ENCODE measurements at regions of chr2 and their contacts with region 1.

Region 1: DNA sequence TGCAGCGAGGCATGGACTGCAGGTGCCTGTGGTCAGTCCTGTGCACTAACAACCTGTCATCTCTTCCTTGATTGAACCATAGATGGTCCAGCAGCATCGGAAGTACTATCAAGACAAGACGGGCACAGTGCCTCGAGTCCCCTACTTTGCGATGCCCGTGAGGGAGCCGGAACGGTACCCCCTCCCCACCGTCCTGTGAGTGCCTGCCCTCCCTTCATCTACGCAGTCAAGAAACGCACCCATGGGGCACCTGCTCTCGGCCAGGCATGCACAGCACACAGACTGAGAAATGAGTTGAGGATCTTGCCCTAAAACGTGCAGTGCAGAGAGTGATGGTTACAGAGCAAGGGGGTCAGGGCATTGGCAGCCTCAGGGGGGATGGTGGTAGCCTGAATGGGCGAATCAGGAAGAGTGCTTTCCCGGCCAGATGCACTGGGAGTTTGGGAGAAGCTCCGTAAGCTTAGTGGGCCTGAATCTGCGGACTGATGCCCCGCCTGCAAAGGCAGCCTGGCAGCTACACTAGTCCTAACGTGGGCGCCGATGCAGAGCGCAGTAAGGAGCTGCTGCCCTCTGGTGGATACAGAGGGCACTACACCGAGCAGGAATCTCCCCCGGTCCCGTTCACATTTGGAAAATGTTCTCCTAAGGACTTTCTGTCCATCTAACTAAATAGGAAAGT is 63.6 kb downstream of the CIB4 start:
- DNase-seq: peak; percentile 26 to 76 (median 55)
- ATAC-seq: peak; percentile 93
- H3K4me3 ChIP-seq: no peak overlapping the region
- H3K4me3 Mint-ChIP-seq: no peak overlapping the region
- H3K27ac ChIP-seq: no peak overlapping the region
- H3K27ac Mint-ChIP-seq: no peak overlapping the region
- H3K4me1 ChIP-seq: peaks cover 4% of the 10 kb centered on the region
- H3K4me1 Mint-ChIP-seq: no peaks in the 10 kb centered on the region
- H3K27me3 ChIP-seq: peaks cover 9 to 10% of the 10 kb centered on the region in 2 experiments
- H3K27me3 Mint-ChIP-seq: peaks cover 30% of the 10 kb centered on the region
- CTCF ChIP-seq: peak; percentile 98

Region 2: DNA sequence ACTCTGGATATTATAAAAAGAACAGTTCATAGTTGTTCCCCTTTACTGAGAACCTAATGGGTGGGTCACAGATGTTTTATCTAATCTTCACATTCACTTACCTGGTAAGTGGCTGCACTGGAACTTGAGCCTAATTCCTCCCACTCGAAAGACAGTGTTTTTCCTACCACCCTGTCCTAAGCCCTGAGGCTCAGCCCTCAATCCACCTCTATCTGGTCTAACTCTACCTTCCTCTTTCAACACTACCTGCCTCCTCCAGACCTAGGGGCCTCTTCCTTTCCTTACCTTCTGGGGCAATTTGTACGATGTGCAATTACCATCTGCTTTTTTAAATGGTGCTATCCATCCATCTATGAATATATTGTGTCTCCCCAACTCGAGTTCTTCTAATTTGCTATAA is 585.6 kb before region 1 on chr2:
- CTCF ChIA-PET with region 1: interaction called, 7 read pairs
- POLR2A ChIA-PET with region 1: no interaction called
- intact Hi-C with region 1: loop called in 1 of 2 experiments (anchors 5 kb)
- DNase-seq: no peak
- ATAC-seq: peak; percentile 13
- H3K4me3 ChIP-seq: no peak overlapping the region
- H3K4me3 Mint-ChIP-seq: no peak overlapping the region
- H3K27ac ChIP-seq: no peak overlapping the region
- H3K27ac Mint-ChIP-seq: peak overlapping the region; percentile 1
- H3K4me1 ChIP-seq: peaks cover 9% of the 10 kb centered on the region
- H3K4me1 Mint-ChIP-seq: peaks cover 8% of the 10 kb centered on the region
- H3K27me3 ChIP-seq: no peaks in the 10 kb centered on the region
- H3K27me3 Mint-ChIP-seq: no peaks in the 10 kb centered on the region
- CTCF ChIP-seq: no peak

Region 3: DNA sequence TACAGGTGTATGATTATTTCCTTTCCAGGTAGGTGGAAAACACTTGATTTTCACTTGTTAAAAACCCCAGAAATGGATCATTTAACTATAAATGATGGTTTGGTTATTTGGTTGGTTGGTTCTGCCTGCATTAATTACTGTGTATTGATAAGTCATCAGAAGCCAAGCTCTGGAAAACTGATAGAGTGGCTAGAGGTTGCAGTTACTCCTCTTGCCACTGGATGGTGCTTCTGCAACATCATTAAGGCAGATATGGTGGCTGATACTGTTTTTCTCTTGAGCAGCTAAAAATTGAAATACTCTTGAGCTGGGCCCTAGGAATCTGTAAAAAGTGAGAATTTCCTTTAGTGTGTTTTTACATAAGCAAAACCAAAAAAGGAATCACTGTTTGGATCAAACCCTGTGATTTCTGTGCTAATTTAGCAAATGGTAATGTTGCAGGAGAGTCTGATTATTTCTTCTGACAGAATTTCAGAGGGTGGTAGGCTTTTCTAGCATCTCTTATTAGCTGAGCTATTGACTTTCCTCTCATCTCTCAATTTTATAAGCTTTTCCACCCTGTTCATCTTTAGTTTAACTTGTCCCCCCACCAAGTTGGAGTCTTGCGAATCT is 489.4 kb before region 1 on chr2:
- CTCF ChIA-PET with region 1: no interaction called
- POLR2A ChIA-PET with region 1: no interaction called
- intact Hi-C with region 1: loop called in 1 of 2 experiments (anchors 10 kb)
- DNase-seq: peak in 5 of 14 experiments; percentile 9 to 61 (median 47)
- ATAC-seq: peak; percentile 86
- H3K4me3 ChIP-seq: no peak overlapping the region
- H3K4me3 Mint-ChIP-seq: no peak overlapping the region
- H3K27ac ChIP-seq: no peak overlapping the region
- H3K27ac Mint-ChIP-seq: no peak overlapping the region
- H3K4me1 ChIP-seq: peaks cover 4% of the 10 kb centered on the region
- H3K4me1 Mint-ChIP-seq: peaks cover 48% of the 10 kb centered on the region
- H3K27me3 ChIP-seq: no peaks in the 10 kb centered on the region
- H3K27me3 Mint-ChIP-seq: no peaks in the 10 kb centered on the region
- CTCF ChIP-seq: peak; percentile 77

Region 4: GRCh38 chr2:26235085-26235484 is 342.5 kb before region 1 on chr2:
- CTCF ChIA-PET with region 1: no interaction called
- POLR2A ChIA-PET with region 1: no interaction called
- intact Hi-C with region 1: loop called (anchors 5 to 10 kb)
- DNase-seq: peak in 2 of 14 experiments; percentile 25 to 32
- ATAC-seq: no peak
- H3K4me3 ChIP-seq: no peak overlapping the region
- H3K4me3 Mint-ChIP-seq: no peak overlapping the region
- H3K27ac ChIP-seq: no peak overlapping the region
- H3K27ac Mint-ChIP-seq: no peak overlapping the region
- H3K4me1 ChIP-seq: no peaks in the 10 kb centered on the region
- H3K4me1 Mint-ChIP-seq: peaks cover 7% of the 10 kb centered on the region
- H3K27me3 ChIP-seq: no peaks in the 10 kb centered on the region
- H3K27me3 Mint-ChIP-seq: no peaks in the 10 kb centered on the region
- CTCF ChIP-seq: peak; percentile 37

Region 5: GRCh38 chr2:26503231-26503880 is 74.2 kb before region 1 on chr2:
- CTCF ChIA-PET with region 1: interaction called, 5 read pairs
- POLR2A ChIA-PET with region 1: no interaction called
- intact Hi-C with region 1: loop called (anchors 1 kb)
- DNase-seq: peak; percentile 62 to 85 (median 72)
- ATAC-seq: peak; percentile 99
- H3K4me3 ChIP-seq: peak overlapping the region; percentile 53
- H3K4me3 Mint-ChIP-seq: peak overlapping the region; percentile 75
- H3K27ac ChIP-seq: no peak overlapping the region
- H3K27ac Mint-ChIP-seq: no peak overlapping the region
- H3K4me1 ChIP-seq: peaks cover 13% of the 10 kb centered on the region
- H3K4me1 Mint-ChIP-seq: peaks cover 7% of the 10 kb centered on the region
- H3K27me3 ChIP-seq: peaks cover 0 to 2% of the 10 kb centered on the region in 2 experiments
- H3K27me3 Mint-ChIP-seq: no peaks in the 10 kb centered on the region
- CTCF ChIP-seq: peak; percentile 93

Measured in CD4-positive, alpha-beta T cell (primary cell).